Activated CD4-positive, alpha-beta memory T cell treated with anti-CD3 and anti-CD28 coated beads for 36 hours (primary cell): ENCODE measurements at regions of chr12 and their contacts with region 1.

Region 1: DNA sequence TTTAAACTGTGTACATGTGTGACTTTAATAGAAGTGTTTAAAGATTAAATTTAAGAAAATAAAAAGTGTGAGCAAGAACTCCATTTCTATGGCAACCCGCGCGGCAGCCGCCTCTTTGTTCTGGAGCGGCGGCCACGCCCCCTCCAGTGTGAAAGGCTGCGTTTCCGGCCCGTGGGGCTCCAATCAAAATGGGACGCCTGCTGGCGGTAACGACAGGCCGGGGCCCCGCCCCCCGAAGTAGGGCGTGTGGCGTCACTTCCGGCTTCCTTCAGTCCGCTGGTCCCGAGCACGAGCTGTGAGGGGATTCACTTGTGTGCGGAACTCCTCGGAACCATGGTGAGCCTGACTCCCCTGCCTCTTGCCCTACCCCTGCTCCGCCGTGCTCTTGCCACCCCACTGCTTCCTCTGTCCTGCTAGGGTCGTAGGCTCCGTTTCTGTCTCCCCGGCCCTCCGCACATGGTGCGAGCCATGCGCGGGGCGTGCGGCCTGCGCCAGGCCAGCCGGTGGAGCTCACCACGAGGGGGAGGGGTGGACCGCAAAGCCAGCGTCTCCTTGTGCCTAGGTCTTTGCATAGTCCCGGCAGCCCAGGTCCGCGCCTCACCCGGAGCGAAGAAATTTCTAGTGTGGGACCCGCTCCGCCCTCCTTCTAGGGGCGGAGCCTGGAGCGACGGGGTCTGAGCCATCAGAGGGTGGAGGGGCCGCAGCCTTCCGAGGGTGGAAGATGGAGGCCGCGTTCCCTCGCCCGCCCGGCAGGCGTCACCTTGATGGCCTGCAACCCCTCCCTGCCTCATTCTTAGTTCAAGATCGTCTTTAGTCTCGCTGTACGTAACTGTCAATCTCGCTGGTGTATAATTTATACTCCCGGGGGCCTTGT is at the start of gene CCT2:
- DNase-seq: peak; percentile 97
- H3K4me3 Mint-ChIP-seq: peak within 1 kb of the TSS; percentile 83
- H3K27ac Mint-ChIP-seq: peak within 1 kb of the TSS; percentile 90
- H3K4me1 Mint-ChIP-seq: peaks cover 31% of the 10 kb centered on the region
- H3K27me3 Mint-ChIP-seq: no peaks in the 10 kb centered on the region
- total RNA-seq, gene CCT2: 264 to 267 TPM

Region 2: DNA sequence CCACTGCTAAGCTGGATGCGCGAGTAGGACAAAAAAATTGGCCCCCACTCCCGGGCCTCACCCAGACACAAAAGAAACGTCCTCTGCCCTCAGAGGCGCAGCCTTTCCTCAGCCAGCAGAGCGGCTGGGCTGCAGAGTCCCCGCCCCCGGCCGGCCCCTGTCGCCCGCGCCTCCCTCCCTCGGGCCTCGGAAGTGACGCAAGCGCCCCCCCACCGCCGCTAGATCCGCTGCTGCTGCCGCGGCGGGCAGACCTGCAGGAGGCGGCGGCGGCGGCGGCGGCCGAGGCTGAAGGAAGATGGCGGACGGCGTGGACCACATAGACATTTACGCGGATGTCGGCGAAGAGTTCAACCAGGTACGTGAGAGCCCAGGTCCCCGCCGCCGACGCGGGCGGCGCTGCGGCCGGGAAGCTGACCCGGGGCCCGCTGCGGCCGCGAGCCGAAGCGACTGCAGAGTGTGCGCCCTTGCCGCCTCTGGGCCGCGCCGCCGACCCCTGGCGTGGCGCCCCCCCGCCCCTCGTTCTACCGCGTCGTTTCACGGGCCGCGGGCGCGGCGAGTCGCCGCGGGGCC is 346.0 kb before region 1 on chr12 and contains the start of gene CPSF6:
- CTCF ChIA-PET with region 1: no interaction called
- POLR2A ChIA-PET with region 1: no interaction called
- intact Hi-C with region 1: loop called (anchors 1 kb)
- DNase-seq: peak; percentile 98
- H3K4me3 Mint-ChIP-seq: peak within 1 kb of the TSS; percentile 96
- H3K27ac Mint-ChIP-seq: peak within 1 kb of the TSS; percentile 99
- H3K4me1 Mint-ChIP-seq: peaks cover 46% of the 10 kb centered on the region
- H3K27me3 Mint-ChIP-seq: no peaks in the 10 kb centered on the region
- total RNA-seq, gene CPSF6: 86.6 to 90.0 TPM

Region 3: DNA sequence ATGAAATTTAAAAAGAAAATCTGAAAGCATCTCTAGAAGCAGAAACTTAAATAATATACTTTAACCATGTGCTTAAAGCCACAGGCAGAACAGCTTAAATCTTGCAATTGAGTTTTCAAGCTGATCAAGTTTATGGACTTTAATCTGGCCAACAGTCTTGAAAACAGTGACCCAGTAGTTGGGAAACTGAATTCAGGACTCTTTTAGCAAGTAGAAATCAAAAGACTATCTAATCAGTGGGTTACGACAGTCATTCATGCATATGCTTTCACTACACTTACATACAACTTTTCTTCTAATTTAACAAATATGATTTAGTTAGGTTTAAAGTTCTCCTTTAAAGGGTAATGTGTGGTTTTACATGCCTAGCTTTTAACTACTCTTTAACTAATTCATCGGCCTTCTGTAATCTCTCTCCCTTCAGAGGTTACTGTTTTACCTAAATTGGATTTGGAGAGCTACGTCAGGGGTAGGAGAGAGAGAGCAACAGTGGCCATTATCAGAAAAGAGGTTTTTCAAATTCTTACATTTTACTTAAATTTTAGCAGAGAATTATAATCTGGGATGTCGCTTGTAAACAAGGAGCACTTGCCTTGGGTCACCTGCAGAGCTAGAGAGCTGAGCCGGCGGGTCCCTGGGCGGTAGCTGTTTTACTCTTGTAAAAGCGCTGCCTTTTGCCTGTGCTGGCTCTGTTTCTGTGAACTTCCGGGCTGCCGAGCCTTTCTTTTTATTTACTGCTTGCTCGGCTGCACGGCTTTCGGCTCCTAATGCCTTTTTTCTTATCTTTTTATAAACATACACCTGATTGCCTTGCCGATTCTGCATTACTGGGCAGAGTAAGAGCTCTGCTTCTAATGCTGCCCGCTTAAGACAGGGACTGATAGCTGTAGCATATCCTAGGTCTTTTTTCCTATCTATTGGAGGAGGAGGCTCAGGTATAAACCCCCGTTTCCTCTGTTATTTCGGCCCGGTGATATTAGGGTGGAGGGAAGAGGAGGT is 254.7 kb before region 1 on chr12:
- CTCF ChIA-PET with region 1: no interaction called
- POLR2A ChIA-PET with region 1: interaction called, 3 read pairs
- intact Hi-C with region 1: loop called (anchors 1 kb)
- DNase-seq: peak; percentile 71
- H3K4me3 Mint-ChIP-seq: peak overlapping the region; percentile 73
- H3K27ac Mint-ChIP-seq: peak overlapping the region; percentile 88
- H3K4me1 Mint-ChIP-seq: peaks cover 53% of the 10 kb centered on the region
- H3K27me3 Mint-ChIP-seq: no peaks in the 10 kb centered on the region

Region 4: GRCh38 chr12:69639400-69640016 is 54.1 kb after region 1 on chr12:
- CTCF ChIA-PET with region 1: interaction called, 3 read pairs
- POLR2A ChIA-PET with region 1: no interaction called
- intact Hi-C with region 1: loop called (anchors 2 kb)
- DNase-seq: peak; percentile 73
- H3K4me3 Mint-ChIP-seq: no peak overlapping the region
- H3K27ac Mint-ChIP-seq: no peak overlapping the region
- H3K4me1 Mint-ChIP-seq: no peaks in the 10 kb centered on the region
- H3K27me3 Mint-ChIP-seq: no peaks in the 10 kb centered on the region

Region 5: DNA sequence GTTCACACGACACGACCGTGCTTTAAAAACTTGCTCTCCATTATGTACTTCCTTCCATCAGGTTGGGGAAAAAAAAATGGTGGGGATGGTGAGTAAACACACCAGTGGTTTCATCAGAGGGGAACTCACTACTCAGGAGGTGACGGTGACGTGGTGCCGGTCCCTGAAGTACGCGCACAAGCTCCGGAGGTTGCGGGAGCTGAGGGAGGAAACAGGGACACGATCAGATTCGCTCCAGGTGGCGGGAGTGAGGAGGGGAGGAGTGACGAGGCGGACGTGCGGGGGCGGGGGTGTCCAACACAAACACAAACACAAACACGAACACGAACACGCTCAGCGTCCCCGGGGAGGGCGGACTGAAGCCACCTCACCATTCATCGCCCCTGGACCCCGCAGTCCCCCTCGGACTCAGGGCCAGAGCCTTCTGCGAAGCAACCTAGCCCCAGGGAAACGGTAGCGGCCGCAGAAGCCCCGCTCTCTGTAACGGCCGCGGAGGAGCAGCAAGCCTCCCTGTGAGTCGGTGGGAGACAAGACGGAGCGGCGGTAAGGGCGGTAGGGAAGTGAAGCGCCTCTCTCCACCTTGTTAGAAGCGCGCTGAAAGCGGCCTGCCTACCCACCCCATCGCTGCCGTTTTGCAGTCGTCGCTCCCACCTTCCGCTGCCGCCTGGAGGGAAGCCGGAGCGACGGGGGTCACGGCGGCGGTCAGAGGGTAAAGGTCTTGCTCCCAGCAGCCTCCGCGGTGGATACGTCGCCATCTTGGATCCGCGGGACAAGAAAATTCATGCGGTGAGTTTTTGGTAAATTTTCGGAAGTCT is 657.5 kb after region 1 on chr12 and contains the start of gene CNOT2:
- CTCF ChIA-PET with region 1: no interaction called
- POLR2A ChIA-PET with region 1: no interaction called
- intact Hi-C with region 1: loop called (anchors 10 kb)
- DNase-seq: peak; percentile 94
- H3K4me3 Mint-ChIP-seq: peak within 1 kb of the TSS; percentile 99
- H3K27ac Mint-ChIP-seq: peak within 1 kb of the TSS; percentile 100
- H3K4me1 Mint-ChIP-seq: peaks cover 55% of the 10 kb centered on the region
- H3K27me3 Mint-ChIP-seq: no peaks in the 10 kb centered on the region
- total RNA-seq, gene CNOT2: 58.4 to 58.5 TPM